Posterior vena cava (tissue), 2 donors: ENCODE measurements at regions of chr1 and their contacts with region 1.

Region 1: DNA sequence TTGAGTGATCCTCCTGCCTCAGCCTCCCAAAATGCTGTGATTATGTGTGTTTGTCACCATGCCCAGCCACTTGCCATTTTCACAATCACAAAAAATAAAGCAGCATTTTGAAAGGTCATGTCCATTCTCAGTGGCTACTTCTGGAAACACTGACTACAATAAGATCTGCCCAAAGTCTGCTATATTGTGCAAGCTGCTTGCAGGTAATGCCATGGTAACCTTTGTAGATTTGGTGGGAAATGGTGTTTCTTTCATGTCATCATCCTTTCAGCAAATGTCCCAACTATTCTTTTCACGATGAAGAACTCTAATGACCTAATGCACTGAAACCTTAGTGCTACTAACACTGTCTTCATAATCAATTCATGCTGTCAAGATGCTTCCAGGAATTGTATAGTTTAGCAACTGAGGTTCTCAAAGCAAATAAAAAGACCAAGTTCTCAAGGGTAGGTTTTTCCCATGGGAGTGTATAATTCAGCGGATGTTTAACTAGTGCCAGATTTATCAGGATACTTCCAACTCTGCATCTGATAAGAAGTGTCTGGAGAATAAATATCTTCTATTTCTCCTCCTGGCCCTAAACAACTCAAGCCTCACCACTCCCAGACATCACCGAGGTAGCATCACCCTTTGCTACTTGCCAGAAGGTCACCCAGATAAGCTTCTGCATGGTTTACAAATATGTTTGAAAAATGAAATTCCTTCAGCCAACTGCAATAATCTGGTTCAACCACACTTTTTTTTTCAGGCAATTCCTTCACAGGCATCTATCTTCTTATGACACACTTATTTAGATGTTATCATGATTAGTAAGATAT is 132.0 kb upstream of the ZC3H11B start:
- DNase-seq: no peak

Region 2: DNA sequence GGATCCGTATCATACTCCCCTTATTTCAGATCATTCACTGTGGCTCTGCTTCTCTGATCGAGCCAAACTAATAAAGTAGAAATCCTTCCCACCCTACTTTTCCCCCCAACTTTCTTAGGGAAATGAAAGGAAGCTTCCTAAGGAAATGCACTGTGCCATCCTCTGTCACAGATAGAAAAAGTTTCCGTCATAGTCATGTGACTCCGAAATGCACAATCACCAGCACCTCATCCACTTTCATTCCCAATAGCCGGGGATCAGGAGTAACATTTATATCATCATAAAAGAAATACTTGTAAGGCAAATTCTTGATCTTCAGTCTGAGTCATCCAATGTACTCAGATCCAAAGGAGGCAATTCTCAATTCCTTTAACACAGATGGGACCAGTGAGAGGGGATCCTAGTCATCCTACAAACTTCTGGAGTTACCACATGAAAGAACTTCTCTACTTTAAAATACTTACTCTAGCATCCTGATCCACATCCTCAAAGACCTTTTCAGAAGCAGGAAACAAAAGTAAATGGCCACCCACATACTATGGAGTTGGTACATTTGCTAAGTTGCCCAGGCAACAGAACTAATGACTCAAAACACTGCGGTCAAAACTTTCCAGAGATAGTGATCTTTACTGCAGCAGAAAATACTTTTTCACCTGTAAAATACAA is 34.2 kb before region 1 on chr1:
- intact Hi-C with region 1: loop called in 1 of 2 experiments (anchors 2 kb)
- DNase-seq: no peak

Region 3: GRCh38 chr1:219761208-219761860 is 16.5 kb after region 1 on chr1:
- intact Hi-C with region 1: loop called in 1 of 2 experiments (anchors 2 kb)
- DNase-seq: no peak

Region 4: DNA sequence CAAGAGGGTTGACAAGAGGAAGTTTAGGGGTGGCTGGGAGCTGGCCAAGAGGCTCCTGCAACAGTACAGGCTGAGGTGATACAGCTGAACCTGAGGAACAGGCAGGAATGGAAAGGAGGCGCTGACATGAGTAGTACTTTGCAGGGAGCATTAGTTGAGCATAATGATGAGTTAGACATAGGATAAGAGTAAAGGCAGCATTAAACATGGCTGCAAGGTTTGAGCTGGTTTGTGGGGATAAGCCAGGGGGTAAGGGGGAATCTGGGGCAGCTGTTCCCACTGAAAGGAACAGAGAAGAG is 162.9 kb after region 1 on chr1:
- intact Hi-C with region 1: no loop called
- DNase-seq: no peak